Left lung (tissue), 14 donors: ENCODE measurements at regions of chr14 and their contacts with region 1.

Region 1: GRCh38 chr14:33792720-33793368 is 158.0 kb downstream of the EGLN3 start:
- DNase-seq: peak; percentile 65 to 92 (median 89)
- ATAC-seq: peak; percentile 96
- H3K4me3 ChIP-seq: no peak overlapping the region
- H3K27ac ChIP-seq: no peak overlapping the region
- H3K4me1 ChIP-seq: peaks cover 0 to 4% of the 10 kb centered on the region in 2 donors
- H3K27me3 ChIP-seq: peaks cover 0 to 37% of the 10 kb centered on the region in 2 donors
- CTCF ChIP-seq: peak; percentile 85 to 93

Region 2: DNA sequence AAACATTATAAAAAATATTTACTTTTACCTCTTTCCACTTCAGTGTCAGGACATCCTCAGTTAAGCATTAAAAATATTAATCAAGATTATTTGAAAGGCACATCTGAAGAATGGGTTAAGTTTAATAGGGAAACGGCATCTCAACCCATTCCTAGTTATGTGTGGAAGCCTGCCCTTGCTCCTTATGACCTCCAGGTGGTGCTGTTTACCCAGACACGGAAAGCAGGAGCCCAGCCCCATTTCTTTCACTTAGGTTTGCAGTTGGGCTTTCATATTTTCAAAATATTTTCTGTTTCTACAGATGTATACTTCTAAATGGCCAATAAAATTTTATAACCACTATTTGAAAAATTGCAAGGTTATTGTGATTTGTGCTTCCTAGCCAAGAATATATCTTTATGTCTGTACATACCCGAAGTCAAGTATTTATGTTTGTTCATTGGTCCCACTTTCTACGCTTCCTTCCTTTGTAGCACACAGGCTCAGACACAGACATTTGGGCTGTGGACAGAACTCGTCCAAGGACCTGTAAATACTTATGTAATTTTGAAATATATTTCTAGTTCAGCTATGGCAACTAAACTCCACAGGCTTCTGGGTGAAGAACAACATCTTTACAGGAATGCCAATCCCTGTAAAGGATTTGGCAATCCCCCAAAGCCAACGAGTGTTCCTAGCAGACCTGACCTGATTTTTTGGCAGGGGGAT is 1216.6 kb before region 1 on chr14:
- intact Hi-C with region 1: loop called in 1 of 2 experiments (anchors 10 kb)
- DNase-seq: peak in 2 of 4 donors; percentile 51 to 77
- ATAC-seq: peak; percentile 98
- H3K4me3 ChIP-seq: no peak overlapping the region
- H3K27ac ChIP-seq: no peak overlapping the region
- H3K4me1 ChIP-seq: no peaks in the 10 kb centered on the region
- H3K27me3 ChIP-seq: no peaks in the 10 kb centered on the region
- CTCF ChIP-seq: peak; percentile 91 to 92

Region 3: DNA sequence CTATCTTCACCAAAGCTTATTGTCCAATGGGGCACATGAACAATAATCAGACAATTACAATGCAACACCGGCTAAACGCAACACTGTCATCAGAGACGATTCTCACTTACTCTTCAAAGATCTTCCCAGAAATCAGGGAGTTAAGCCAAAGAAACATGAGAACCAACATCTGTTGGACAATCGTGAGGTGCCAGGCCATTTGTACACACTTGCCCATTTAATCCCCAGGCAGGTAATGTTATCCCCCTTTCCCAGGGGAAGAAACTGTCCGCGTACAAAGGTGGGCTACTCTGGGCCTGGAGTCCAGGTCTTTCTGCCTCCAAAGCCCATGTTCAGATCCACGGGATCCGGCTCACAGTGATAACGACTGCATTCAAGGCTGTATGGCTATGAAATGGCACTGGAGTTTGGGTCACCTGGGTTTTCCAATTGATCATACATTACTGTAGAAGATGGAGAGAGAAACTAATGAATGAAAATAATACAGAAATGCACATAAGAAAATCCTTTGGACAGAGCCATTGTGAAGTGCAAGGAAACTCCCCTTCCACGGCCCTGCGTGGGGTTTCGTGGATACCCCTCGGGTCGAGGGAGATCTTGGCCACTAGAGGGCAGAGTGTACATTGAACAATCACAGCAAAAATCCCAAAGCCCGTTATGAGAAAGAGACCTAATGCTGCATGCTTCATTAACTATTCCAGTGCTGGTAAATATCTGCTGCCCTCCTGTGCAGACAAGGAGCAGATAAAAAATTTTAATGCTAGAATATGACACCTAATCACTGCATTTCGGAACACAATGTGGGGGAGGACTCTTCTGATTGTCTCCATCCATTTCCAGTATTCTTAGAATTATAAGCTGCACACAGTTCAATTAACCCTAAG is 46.6 kb after region 1 on chr14:
- intact Hi-C with region 1: no loop called
- DNase-seq: peak in 3 of 4 donors; percentile 25 to 65 (median 47)
- ATAC-seq: peak; percentile 86
- H3K4me3 ChIP-seq: no peak overlapping the region
- H3K27ac ChIP-seq: no peak overlapping the region
- H3K4me1 ChIP-seq: no peaks in the 10 kb centered on the region
- H3K27me3 ChIP-seq: no peaks in the 10 kb centered on the region
- CTCF ChIP-seq: peak; percentile 79 to 83

Region 4: GRCh38 chr14:34003691-34004090 is 210.8 kb after region 1 on chr14:
- intact Hi-C with region 1: no loop called
- DNase-seq: no peak
- ATAC-seq: no peak
- H3K4me3 ChIP-seq: no peak overlapping the region
- H3K27ac ChIP-seq: no peak overlapping the region
- H3K4me1 ChIP-seq: no peaks in the 10 kb centered on the region
- H3K27me3 ChIP-seq: no peaks in the 10 kb centered on the region
- CTCF ChIP-seq: no peak